Activated T-helper 1 cell treated with anti-CD3 and anti-CD28 coated beads, Interleukin-12 subunit alpha, Interleukin-12 subunit beta, Interleukin-2, Interleukin-4 antibody, amounts not matched to agents 30 ng/mL and 10 ng/mL and 1 ng/mL, durations not matched to agents 14 hours and 24 hours and 36 hours (primary cell): ENCODE measurements at regions of chr7 and their contacts with region 1.

Region 1: DNA sequence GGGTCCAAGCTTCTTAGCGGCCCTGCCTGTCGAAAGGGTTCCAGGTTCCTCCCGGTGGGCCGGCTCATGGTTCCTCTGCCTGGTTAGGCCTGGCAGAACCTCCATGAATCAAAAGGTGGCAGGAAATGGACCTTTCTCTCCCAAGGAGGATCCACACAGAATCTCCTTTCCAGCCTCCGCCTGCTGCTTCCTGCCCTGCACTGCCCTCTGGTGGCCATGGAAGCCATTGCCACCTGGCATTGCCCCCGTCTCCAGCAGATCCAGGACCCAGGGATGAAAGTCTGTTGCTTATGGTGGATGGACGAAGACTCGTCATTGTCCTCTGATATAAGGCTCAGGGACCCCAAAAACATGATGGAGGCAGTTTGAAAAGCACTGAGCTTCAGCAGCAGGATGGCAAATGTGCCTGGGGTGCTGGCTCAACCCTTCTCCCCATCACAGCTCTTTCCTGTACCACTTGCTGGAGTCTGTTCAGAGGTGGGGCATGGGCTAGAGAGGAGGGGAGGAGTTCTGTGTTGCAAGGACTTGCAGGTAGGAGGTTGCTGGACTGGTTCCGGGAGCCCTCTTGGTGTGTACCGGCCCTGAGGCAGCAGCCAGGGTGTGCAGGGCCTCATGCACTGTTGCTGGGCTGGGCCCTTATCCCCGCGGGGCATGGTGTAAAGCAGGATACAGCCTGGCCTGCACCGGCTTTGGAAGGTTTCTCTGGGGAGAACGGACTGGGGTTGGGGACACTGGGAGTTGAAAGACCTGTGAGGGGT is 11.3 kb upstream of the INMT start:
- DNase-seq: peak; percentile 63
- H3K4me3 Mint-ChIP-seq: no peak overlapping the region
- H3K27ac Mint-ChIP-seq: no peak overlapping the region
- H3K4me1 Mint-ChIP-seq: peaks cover 34% of the 10 kb centered on the region
- H3K27me3 Mint-ChIP-seq: peaks cover 4% of the 10 kb centered on the region

Region 2: DNA sequence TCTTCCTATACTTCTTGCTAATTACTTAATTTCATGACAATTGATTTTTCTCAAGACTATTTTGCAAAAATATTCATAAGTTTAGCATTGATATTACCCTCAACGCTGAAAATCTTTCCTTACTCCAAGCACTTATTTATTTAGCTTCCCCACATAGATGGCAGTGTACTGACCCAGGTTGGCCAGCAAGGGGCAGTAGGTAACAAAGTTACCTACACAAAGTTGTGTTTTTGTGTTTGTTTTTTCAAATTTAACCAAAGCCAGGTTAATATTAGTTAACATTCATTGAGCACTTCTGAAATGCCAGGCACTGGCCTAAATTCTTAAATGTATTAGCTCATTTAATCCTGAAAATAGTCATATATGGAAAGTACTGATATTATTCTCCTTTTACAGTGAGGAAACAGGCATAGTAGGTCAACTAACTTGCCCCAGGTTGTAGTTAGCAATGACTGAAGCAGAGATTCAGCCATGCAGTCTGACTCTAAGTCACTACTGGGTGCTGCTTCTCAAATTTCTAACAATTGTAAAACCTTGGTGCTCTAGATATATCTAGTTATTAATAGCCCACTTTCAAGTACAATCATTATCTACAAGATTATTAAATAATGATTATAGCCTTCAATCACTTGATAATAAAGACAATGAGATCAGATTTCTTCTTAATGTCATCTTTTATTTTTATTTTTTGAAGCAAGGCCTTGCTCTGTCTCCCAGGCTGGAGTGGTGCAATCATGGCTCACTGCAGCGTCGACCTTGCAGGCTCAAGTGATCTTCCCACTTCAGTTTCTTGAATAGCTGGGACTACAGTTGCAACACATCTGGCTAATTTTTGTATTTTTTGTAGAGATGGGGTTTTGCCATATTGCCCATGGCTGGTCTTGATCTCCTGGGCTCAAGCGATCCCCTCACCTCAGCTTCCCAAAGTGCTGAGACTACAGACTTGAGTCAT is 230.2 kb before region 1 on chr7:
- intact Hi-C with region 1: loop called (anchors 1 kb)
- DNase-seq: no peak
- H3K4me3 Mint-ChIP-seq: no peak overlapping the region
- H3K27ac Mint-ChIP-seq: no peak overlapping the region
- H3K4me1 Mint-ChIP-seq: peaks cover 5% of the 10 kb centered on the region
- H3K27me3 Mint-ChIP-seq: no peaks in the 10 kb centered on the region

Region 3: DNA sequence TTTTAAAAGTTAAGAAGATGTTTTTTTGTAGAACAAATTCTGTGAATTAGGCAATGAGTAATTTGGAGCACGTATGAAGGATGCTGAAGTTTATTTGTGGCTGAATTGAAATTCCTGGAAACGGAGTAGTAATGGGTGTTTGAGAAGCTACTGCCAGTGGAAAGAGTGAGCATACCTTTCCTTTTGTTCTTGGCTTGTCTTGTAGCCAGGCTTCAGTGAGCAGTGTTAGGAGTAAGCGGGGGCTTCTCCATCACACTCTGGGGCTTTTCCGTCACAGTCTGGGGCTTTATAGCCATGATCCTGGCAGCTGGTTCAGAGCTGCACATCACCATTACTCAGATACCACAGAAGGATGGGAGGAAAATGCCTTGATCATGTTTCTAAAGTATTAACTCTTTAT is 113.6 kb before region 1 on chr7:
- intact Hi-C with region 1: loop called (anchors 1 kb)
- DNase-seq: no peak
- H3K4me3 Mint-ChIP-seq: no peak overlapping the region
- H3K27ac Mint-ChIP-seq: peak overlapping the region; percentile 88
- H3K4me1 Mint-ChIP-seq: peaks cover 19% of the 10 kb centered on the region
- H3K27me3 Mint-ChIP-seq: no peaks in the 10 kb centered on the region

Region 4: GRCh38 chr7:30727061-30727945 is 13.3 kb before region 1 on chr7:
- intact Hi-C with region 1: loop called (anchors 1 kb)
- DNase-seq: peak; percentile 54
- H3K4me3 Mint-ChIP-seq: peak overlapping the region; percentile 79
- H3K27ac Mint-ChIP-seq: peak overlapping the region; percentile 90
- H3K4me1 Mint-ChIP-seq: peaks cover 49% of the 10 kb centered on the region
- H3K27me3 Mint-ChIP-seq: peaks cover 2% of the 10 kb centered on the region

Region 5: DNA sequence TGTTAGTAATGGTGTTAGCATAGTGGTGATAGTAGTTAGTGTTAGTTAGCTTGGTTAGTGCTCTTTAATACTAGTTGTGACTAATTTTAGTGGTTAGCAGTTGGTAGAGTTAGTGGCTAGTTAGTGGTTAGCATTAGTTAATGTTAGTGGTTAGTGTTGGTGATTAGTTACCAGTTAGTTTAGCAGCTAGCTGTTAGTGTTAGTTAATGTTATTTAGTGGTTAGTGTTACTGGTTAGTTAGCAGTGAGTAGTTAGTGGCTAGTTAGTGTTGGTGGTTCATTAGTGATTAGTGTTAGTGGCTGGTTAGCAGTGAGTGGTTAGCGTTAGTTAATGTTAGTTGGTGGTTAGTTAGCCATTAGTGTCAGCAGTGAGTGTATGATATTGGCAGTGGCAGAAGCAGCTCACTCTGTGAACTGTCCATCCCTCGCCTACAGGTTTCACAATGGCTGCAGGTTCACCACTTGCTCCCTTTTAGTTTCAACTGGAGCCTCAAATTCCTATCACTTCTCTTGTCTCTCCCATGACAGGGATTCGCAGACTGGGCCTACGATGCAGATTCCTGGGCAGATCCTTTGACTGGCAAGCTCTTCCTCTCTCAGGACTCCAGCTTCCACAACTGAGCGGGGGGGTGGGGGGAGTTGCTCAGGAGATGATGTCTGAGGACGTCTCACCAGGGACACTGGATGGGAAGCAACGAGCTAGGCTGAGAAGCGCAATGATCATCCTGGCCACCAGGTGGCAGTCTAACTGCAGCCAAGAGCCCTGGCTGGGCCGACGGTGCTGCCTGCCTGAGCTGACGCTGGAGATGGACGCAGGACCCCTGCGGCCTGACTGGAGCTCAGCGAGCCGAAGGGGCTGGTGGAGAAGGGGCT is 242.7 kb after region 1 on chr7:
- intact Hi-C with region 1: no loop called
- DNase-seq: peak; percentile 63
- H3K4me3 Mint-ChIP-seq: no peak overlapping the region
- H3K27ac Mint-ChIP-seq: no peak overlapping the region
- H3K4me1 Mint-ChIP-seq: peaks cover 18% of the 10 kb centered on the region
- H3K27me3 Mint-ChIP-seq: peaks cover 28% of the 10 kb centered on the region